Sciatic nerve (tissue), 2 donors: ENCODE measurements at regions of chr11 and their contacts with region 1.

Region 1: GRCh38 chr11:68030318-68031138 is at the start of gene NDUFS8:
- DNase-seq: peak; percentile 98
- ATAC-seq: peak; percentile 98
- total RNA-seq, gene NDUFS8: 63.9 TPM

Region 2: DNA sequence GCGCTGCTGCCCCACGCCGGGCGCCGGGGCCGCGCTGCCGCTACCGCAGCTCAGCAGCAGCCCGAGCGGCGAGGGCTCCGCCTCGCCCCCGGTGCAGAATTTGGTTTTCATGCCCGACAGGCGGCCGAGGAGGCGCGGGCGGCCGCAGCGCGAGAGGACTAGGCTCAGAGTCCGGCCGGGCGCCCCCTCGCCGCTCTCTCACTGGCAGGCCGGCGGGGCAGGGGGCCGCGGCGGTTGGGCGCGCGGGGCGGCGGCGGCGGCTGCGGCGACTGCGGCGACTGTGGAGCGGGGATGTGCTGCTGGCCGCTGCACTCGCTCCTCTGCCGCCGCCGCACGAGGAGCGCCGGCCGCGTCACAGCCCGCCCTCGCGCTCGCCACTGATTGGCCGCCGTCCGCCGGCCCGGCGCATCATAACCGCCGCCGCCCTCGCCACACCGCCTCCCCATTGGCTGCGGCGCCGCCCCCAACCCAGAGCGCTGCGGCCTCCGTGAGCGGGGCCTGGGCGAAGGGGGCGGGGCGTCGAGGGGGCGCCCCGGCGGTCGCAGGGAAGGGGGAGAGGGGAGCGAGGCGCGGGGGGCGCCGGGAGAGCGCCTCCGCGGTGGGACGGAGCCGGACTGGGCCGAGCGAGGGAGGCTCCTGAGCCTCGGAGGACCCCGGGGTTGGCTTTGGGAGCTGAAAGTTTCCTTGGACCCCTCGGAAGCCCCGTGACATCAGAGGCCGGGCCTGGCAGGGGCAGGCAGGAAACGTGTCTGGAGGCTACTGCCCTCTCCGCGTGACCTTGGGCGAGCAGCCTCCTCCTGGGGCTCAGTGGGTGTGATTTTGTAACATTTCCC is 90.8 kb after region 1 on chr11 and contains the start of gene CHKA:
- intact Hi-C with region 1: loop called (anchors 10 kb)
- DNase-seq: peak; percentile 96
- ATAC-seq: peak; percentile 94
- total RNA-seq, gene CHKA: 38.0 TPM

Region 3: GRCh38 chr11:68150039-68150438 is 119.5 kb after region 1 on chr11:
- intact Hi-C with region 1: no loop called
- DNase-seq: no peak
- ATAC-seq: no peak